Endothelial cell of umbilical vein (primary cell): ENCODE measurements at regions of chr12 and their contacts with region 1.

Region 1: DNA sequence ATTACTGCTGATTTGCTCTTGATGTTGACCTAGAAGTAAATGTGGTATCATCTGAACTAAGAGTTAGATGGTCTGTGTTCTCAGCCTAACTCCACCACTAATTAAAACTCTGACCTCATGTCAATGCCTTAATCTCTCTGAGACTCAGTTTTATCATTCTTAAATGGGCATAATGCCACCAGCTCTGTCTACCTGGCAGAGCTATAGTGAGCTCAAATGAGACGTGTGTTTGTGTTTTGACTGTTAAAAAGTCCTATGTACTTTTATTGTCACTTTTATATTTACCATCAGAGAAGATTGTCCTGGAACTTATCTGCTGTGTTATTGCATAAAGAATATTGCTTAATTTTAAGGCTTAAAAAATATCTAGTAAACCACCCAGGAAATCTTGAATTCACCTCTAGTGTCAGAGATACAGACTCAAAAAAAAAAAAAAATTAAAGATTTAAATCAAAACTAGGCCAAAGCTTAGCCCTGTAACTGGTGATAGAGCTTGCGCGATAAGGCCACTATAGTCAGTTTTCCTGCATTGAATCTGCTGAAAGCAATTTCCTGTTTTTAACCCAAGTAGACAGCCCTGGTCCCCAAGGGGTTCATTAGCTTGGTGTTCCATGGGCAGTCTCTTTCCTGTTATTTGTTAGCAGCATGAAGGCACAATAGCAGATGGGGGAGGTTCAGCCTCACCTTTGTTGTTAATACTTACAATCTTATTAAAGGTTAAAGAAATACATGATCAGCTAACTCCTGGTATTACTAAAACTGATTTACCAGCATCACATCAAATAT is 261.8 kb downstream of the ATP23 start:
- DNase-seq: peak; percentile 90
- H3K4me3 ChIP-seq: no peak overlapping the region
- H3K27ac ChIP-seq: peak overlapping the region; percentile 4
- H3K4me1 ChIP-seq: peaks cover 21% of the 10 kb centered on the region
- H3K27me3 ChIP-seq: no peaks in the 10 kb centered on the region
- CTCF ChIP-seq: no peak
- POLR2A ChIP-seq: no peak

Region 2: DNA sequence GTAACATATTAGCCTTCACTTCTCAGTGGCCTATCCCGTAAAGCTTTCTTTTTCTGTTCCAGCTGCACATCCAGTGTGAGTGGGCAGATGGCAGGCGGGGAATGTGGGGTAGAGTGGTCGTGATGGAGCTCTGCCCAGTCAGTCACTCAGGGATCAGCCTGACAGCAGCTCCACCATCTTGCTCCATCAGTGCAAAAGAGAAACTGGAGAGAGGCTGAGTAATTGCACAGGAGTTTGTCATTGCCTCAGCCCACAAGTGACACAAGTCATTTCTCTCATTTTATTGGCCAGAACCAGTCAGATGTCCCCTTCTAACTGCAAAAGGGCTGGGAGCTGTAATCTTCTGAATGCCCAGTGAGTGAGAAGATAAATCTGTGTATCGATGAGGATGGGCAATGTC is 195.3 kb before region 1 on chr12:
- CTCF ChIA-PET with region 1: no interaction called
- POLR2A ChIA-PET with region 1: no interaction called
- dilution Hi-C with region 1: no loop called
- intact Hi-C with region 1: no loop called
- DNase-seq: no peak
- H3K4me3 ChIP-seq: no peak overlapping the region
- H3K27ac ChIP-seq: no peak overlapping the region
- H3K4me1 ChIP-seq: no peaks in the 10 kb centered on the region
- H3K27me3 ChIP-seq: no peaks in the 10 kb centered on the region
- CTCF ChIP-seq: no peak
- POLR2A ChIP-seq: no peak

Region 3: DNA sequence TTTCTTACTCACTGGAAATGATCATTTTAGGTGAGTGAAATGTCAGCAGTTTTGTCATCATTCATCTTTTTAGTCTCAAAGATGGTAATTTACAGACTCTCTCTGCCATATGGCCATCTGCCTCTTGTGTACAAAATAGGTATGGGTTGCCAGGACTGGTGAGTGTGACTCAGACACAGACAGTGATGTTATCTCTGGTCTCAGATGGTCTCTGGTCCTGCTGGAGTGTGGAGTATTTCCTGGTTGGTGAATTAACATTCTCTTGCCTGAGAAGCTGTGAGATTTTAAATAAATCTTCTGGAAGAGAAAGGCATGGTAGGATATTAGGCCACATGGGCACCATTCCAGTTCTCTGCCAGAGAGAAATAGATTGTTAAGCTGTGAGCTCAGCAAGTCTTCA is 54.7 kb before region 1 on chr12:
- CTCF ChIA-PET with region 1: no interaction called
- POLR2A ChIA-PET with region 1: no interaction called
- dilution Hi-C with region 1: no loop called
- intact Hi-C with region 1: loop called (anchors 1 kb)
- DNase-seq: peak; percentile 94
- H3K4me3 ChIP-seq: no peak overlapping the region
- H3K27ac ChIP-seq: peak overlapping the region; percentile 30
- H3K4me1 ChIP-seq: peaks cover 5% of the 10 kb centered on the region
- H3K27me3 ChIP-seq: peaks cover 0 to 1% of the 10 kb centered on the region in 2 experiments
- CTCF ChIP-seq: no peak
- POLR2A ChIP-seq: no peak

Region 4: GRCh38 chr12:58268069-58268468 is 64.9 kb after region 1 on chr12:
- CTCF ChIA-PET with region 1: no interaction called
- POLR2A ChIA-PET with region 1: no interaction called
- dilution Hi-C with region 1: no loop called
- intact Hi-C with region 1: loop called (anchors 1 kb)
- DNase-seq: peak; percentile 87
- H3K4me3 ChIP-seq: no peak overlapping the region
- H3K27ac ChIP-seq: peak overlapping the region; percentile 66
- H3K4me1 ChIP-seq: peaks cover 18% of the 10 kb centered on the region
- H3K27me3 ChIP-seq: no peaks in the 10 kb centered on the region
- CTCF ChIP-seq: no peak
- POLR2A ChIP-seq: peak; percentile 33